ENCODE measurements at regions of chr2 and their contacts with region 1.

Region 1: GRCh38 chr2:160493227-160494028 is at the start of gene RBMS1:
- DNase-seq: peak; percentile 72
- H3K4me3 ChIP-seq: peak within 1 kb of the TSS; percentile 98
- H3K27ac ChIP-seq: peak within 1 kb of the TSS; percentile 96
- H3K4me1 ChIP-seq: peaks cover 32% of the 10 kb centered on the region
- H3K27me3 ChIP-seq: no peaks in the 10 kb centered on the region
- total RNA-seq, gene RBMS1: 91.7 and 99.3 TPM in 2 replicates

Region 2: GRCh38 chr2:160679686-160680085 is 186.3 kb after region 1 on chr2:
- in situ Hi-C with region 1: no loop called
- DNase-seq: no peak
- H3K4me3 ChIP-seq: no peak overlapping the region
- H3K27ac ChIP-seq: no peak overlapping the region
- H3K4me1 ChIP-seq: no peaks in the 10 kb centered on the region
- H3K27me3 ChIP-seq: no peaks in the 10 kb centered on the region

Region 3: GRCh38 chr2:160968182-160968581 is 474.8 kb after region 1 on chr2:
- in situ Hi-C with region 1: loop called (anchors 5 kb)
- DNase-seq: peak; percentile 50
- H3K4me3 ChIP-seq: no peak overlapping the region
- H3K27ac ChIP-seq: peak overlapping the region; percentile 3; the same call in 1 of the 2 replicates
- H3K4me1 ChIP-seq: peaks cover 28% of the 10 kb centered on the region
- H3K27me3 ChIP-seq: no peaks in the 10 kb centered on the region

Region 4: DNA sequence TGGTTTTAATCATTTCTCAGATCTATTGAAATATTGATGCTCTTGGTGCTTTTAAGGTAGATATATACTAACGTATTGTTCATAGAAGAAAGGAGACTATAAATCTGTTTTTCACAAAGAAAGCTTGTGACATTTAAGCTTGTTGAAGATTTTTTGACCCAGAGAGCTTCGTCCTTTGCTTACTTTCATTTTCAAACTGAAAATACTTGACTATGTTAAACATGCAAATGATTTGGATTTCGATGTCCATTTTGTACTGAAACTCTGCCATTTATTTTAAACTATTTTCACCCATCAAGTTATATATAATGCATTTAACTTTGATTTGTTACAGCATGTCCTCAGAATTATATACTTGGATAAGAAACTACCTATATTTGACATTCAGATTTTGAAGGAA is 1216.0 kb after region 1 on chr2:
- in situ Hi-C with region 1: no loop called
- DNase-seq: no peak
- H3K4me3 ChIP-seq: peak overlapping the region; percentile 55
- H3K27ac ChIP-seq: no peak overlapping the region
- H3K4me1 ChIP-seq: peaks cover 19% of the 10 kb centered on the region
- H3K27me3 ChIP-seq: no peaks in the 10 kb centered on the region